ENCODE measurements at regions of chr20 and their contacts with region 1.

Region 1: GRCh38 chr20:59222253-59223181 is 58.9 kb downstream of the ZNF831 start:
- DNase-seq: peak; percentile 86 to 98
- H3K4me3 ChIP-seq: peak overlapping the region; percentile 57
- H3K4me3 Mint-ChIP-seq: peak overlapping the region; percentile 75
- H3K27ac Mint-ChIP-seq: peak overlapping the region; percentile 62
- H3K4me1 ChIP-seq: peaks cover 6% of the 10 kb centered on the region; the same call in 1 of the 2 replicates
- H3K4me1 Mint-ChIP-seq: peaks cover 10% of the 10 kb centered on the region
- H3K27me3 ChIP-seq: peaks cover 2% of the 10 kb centered on the region; the same call in 1 of the 2 replicates
- H3K27me3 Mint-ChIP-seq: peaks cover 15% of the 10 kb centered on the region
- CTCF ChIP-seq: peak; percentile 99

Region 2: DNA sequence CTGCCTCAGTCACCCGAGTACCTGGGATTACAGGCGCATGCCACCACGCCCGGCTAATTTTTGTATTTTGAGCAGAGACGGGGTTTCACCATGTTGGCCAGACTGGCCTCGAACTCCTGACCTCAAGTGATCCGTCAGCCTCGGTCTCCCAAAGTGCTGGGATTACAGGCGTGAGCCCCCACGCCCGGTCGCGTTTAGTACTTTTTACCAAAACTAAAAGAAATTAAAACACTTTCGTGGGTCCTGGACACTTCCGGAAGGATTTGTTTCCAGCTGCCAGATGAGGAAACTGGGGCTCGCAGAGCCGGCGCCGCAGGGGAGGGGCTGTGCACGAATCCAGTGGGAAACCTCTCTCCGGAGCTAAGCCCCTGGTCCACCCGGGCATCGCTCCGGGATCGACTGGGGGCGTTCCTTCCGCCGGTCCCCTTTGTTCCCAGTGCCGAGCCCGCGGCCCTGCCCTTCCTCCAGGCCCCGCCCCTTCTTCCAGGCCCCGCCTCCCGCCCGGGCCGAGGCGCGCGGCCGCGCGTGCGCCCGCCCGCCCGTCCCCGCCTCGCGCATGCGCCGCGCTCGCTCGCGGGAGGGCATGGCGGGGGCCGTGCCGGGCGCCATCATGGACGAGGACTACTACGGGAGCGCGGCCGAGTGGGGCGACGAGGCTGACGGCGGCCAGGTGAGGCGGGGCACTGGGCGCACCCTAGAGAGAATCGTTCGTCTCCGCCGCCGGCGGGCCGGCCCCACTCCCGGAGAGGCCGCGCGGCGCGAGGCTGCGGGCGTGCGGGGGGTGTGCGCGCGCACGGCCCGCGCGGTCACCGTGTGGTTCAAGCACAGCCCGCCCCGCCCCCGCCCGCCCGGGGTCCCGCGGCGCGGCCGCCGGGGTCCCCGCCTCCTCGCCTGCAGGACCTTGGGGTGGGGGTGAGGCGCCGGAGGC is 241.6 kb before region 1 on chr20 and contains the start of gene NELFCD:
- CTCF ChIA-PET with region 1: interaction called, 11 read pairs
- POLR2A ChIA-PET with region 1: no interaction called
- intact Hi-C with region 1: no loop called
- DNase-seq: peak; percentile 98 to 100
- H3K4me3 ChIP-seq: peak within 1 kb of the TSS; percentile 57
- H3K4me3 Mint-ChIP-seq: peak within 1 kb of the TSS; percentile 76
- H3K27ac Mint-ChIP-seq: peak within 1 kb of the TSS; percentile 51
- H3K4me1 ChIP-seq: peaks cover 12% of the 10 kb centered on the region
- H3K4me1 Mint-ChIP-seq: peaks cover 21% of the 10 kb centered on the region
- H3K27me3 ChIP-seq: no peaks in the 10 kb centered on the region
- H3K27me3 Mint-ChIP-seq: no peaks in the 10 kb centered on the region
- CTCF ChIP-seq: no peak
- total RNA-seq, gene NELFCD: 230 TPM in 2 replicates

Region 3: GRCh38 chr20:59242714-59243113 is 20.2 kb after region 1 on chr20:
- CTCF ChIA-PET with region 1: interaction called, 4 read pairs
- POLR2A ChIA-PET with region 1: no interaction called
- intact Hi-C with region 1: loop called (anchors 1 kb)
- DNase-seq: no peak
- H3K4me3 ChIP-seq: no peak overlapping the region
- H3K4me3 Mint-ChIP-seq: peak overlapping the region; percentile 50
- H3K27ac Mint-ChIP-seq: peak overlapping the region; percentile 56
- H3K4me1 ChIP-seq: peaks cover 39% of the 10 kb centered on the region
- H3K4me1 Mint-ChIP-seq: peaks cover 39% of the 10 kb centered on the region
- H3K27me3 ChIP-seq: no peaks in the 10 kb centered on the region
- H3K27me3 Mint-ChIP-seq: peaks cover 3% of the 10 kb centered on the region
- CTCF ChIP-seq: peak in 1 of 2 experiments; percentile 27

Region 4: DNA sequence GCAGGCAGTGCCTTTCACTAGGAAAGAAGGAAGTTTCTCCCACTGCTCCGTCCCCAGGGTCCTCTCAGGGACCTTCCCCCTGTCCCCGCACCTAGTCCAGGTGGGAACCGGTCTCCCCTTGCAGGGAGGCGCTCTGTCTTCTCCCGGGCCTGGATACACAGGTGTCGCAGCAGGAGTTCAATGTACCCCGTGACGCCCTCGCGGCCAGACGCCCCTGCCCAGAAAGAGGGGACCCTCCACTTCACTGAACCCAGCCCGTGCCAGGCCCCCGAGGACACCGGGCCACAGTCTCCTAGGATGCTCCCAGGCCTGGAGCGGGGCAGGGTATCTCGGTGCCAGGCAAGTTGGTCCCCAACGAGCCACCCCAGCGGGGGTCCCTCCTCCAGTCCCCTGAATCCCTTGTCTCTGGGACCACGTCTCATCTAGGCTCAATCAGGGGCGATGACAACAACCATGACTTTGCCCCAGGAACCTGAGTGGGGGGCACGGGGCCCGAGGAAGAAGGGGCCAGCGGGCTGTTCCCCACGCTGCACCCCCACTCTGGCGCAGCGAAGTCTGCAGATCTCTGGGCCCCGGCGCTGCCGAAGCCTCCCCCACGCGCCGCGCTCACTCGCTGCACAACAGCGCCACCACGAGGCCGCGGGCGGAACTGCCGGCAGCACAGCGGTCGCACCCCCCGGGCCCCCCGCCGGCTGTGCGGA is 180.9 kb after region 1 on chr20:
- CTCF ChIA-PET with region 1: interaction called, 35 read pairs
- POLR2A ChIA-PET with region 1: interaction called, 10 read pairs
- intact Hi-C with region 1: loop called (anchors 1 kb)
- DNase-seq: peak in 1 of 2 experiments; percentile 92
- H3K4me3 ChIP-seq: no peak overlapping the region; the same call in 1 of the 2 replicates
- H3K4me3 Mint-ChIP-seq: peak overlapping the region; percentile 13
- H3K27ac Mint-ChIP-seq: no peak overlapping the region
- H3K4me1 ChIP-seq: peaks cover 20% of the 10 kb centered on the region
- H3K4me1 Mint-ChIP-seq: no peaks in the 10 kb centered on the region
- H3K27me3 ChIP-seq: no peaks in the 10 kb centered on the region; the same call in 1 of the 2 replicates
- H3K27me3 Mint-ChIP-seq: peaks cover 19% of the 10 kb centered on the region
- CTCF ChIP-seq: peak; percentile 99 to 100

Region 5: DNA sequence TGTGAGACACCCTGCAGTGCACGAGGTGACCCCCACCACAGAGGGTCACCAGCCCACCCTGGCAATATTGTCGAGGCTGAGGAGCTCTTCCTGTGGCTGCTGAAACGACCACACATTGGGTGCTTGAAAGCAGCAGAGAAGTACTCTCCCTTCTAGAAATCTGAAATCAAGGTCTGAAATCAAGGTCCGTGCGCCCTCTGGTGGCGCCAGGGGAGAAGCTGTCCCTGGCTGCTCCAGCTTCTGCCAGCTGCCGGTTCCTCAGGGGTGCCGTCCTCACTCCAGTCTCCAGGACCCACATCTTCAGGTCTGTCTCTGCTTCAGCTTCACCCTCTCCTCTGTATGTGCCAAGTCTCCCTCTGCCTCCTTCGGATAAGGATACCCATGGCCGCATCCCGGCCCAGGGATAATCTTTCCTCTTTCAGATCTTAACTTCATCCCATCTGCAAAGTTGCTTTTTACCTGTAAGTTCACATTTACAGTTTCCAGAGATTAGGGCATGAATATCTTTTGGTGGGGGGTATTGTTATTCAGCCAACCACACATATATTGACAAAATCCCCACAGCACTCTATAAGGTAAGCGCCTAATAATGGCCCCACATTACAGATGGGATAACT is 273.5 kb after region 1 on chr20:
- CTCF ChIA-PET with region 1: no interaction called
- POLR2A ChIA-PET with region 1: no interaction called
- intact Hi-C with region 1: loop called (anchors 10 kb)
- DNase-seq: peak; percentile 83 to 88
- H3K4me3 ChIP-seq: no peak overlapping the region
- H3K4me3 Mint-ChIP-seq: no peak overlapping the region
- H3K27ac Mint-ChIP-seq: no peak overlapping the region
- H3K4me1 ChIP-seq: no peaks in the 10 kb centered on the region
- H3K4me1 Mint-ChIP-seq: no peaks in the 10 kb centered on the region
- H3K27me3 ChIP-seq: peaks cover 5% of the 10 kb centered on the region; the same call in 1 of the 2 replicates
- H3K27me3 Mint-ChIP-seq: peaks cover 38% of the 10 kb centered on the region
- CTCF ChIP-seq: peak; percentile 98 to 99

Measured in Caco-2 (cell line).